Activated naive CD4-positive, alpha-beta T cell treated with anti-CD3 and anti-CD28 coated beads for 36 hours (primary cell): ENCODE measurements at regions of chr7 and their contacts with region 1.

Region 1: GRCh38 chr7:149125863-149126661 is at the start of gene ZNF425:
- DNase-seq: peak; percentile 91
- H3K4me3 Mint-ChIP-seq: peak within 1 kb of the TSS; percentile 98
- H3K27ac Mint-ChIP-seq: peak within 1 kb of the TSS; percentile 99
- H3K4me1 Mint-ChIP-seq: peaks cover 22% of the 10 kb centered on the region
- H3K27me3 Mint-ChIP-seq: no peaks in the 10 kb centered on the region
- total RNA-seq, gene ZNF425: 0.57 TPM

Region 2: GRCh38 chr7:149005241-149006050 is 120.6 kb before region 1 on chr7:
- CTCF ChIA-PET with region 1: no interaction called
- intact Hi-C with region 1: loop called (anchors 1 kb)
- DNase-seq: peak; percentile 88
- H3K4me3 Mint-ChIP-seq: no peak overlapping the region
- H3K27ac Mint-ChIP-seq: no peak overlapping the region
- H3K4me1 Mint-ChIP-seq: peaks cover 3% of the 10 kb centered on the region
- H3K27me3 Mint-ChIP-seq: no peaks in the 10 kb centered on the region

Region 3: GRCh38 chr7:149147072-149147751 is 21.1 kb after region 1 on chr7 and contains the start of gene ZNF398:
- CTCF ChIA-PET with region 1: interaction called, 7 read pairs
- intact Hi-C with region 1: loop called (anchors 1 kb)
- DNase-seq: peak; percentile 73
- H3K4me3 Mint-ChIP-seq: peak within 1 kb of the TSS; percentile 87
- H3K27ac Mint-ChIP-seq: peak within 1 kb of the TSS; percentile 91
- H3K4me1 Mint-ChIP-seq: peaks cover 33% of the 10 kb centered on the region
- H3K27me3 Mint-ChIP-seq: no peaks in the 10 kb centered on the region
- total RNA-seq, gene ZNF398: 4.3 to 5.0 TPM

Region 4: GRCh38 chr7:149284850-149285626 is 159.0 kb after region 1 on chr7:
- CTCF ChIA-PET with region 1: no interaction called
- intact Hi-C with region 1: loop called (anchors 1 kb)
- DNase-seq: peak; percentile 99
- H3K4me3 Mint-ChIP-seq: peak overlapping the region; percentile 79
- H3K27ac Mint-ChIP-seq: no peak overlapping the region
- H3K4me1 Mint-ChIP-seq: peaks cover 36% of the 10 kb centered on the region
- H3K27me3 Mint-ChIP-seq: no peaks in the 10 kb centered on the region

Region 5: GRCh38 chr7:149497456-149498261 is 371.6 kb after region 1 on chr7 and contains the start of gene ZNF746:
- CTCF ChIA-PET with region 1: interaction called, 3 read pairs
- intact Hi-C with region 1: loop called (anchors 1 kb)
- DNase-seq: peak; percentile 84
- H3K4me3 Mint-ChIP-seq: peak within 1 kb of the TSS; percentile 93
- H3K27ac Mint-ChIP-seq: peak within 1 kb of the TSS; percentile 90
- H3K4me1 Mint-ChIP-seq: peaks cover 24% of the 10 kb centered on the region
- H3K27me3 Mint-ChIP-seq: peaks cover 2% of the 10 kb centered on the region
- total RNA-seq, gene ZNF746: 11.8 to 12.0 TPM

Region 6: DNA sequence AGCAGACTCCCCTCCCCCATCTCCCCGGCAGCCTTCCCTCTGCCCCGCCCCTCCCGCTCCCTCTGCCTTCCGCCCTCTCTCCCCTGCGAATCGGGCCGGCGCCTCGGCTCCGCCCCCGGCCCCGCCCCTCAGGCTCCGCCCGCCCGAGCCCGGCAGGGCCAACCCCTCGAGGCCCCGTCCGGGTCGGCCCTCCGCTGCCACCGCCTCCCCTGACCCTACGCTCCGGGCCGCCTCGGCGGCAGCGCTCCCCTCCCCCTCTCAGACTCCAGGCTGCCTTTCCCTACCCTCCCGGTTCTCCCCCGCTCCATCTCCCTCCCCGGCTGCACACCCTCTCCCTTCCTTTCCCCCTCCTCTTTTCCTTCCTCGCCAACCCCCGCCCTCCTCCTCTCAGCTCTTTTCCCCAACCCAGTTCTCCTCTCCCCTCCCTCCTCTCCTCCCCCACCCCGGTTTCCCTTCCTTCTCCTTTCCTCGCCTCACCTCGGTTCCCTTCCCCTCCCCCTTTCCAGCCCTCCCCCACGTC is 645.7 kb after region 1 on chr7:
- CTCF ChIA-PET with region 1: interaction called, 3 read pairs
- intact Hi-C with region 1: loop called (anchors 5 kb)
- DNase-seq: peak; percentile 88
- H3K4me3 Mint-ChIP-seq: peak overlapping the region; percentile 71
- H3K27ac Mint-ChIP-seq: no peak overlapping the region
- H3K4me1 Mint-ChIP-seq: peaks cover 6% of the 10 kb centered on the region
- H3K27me3 Mint-ChIP-seq: no peaks in the 10 kb centered on the region